ENCODE measurements at regions of chr1 and their contacts with region 1.

Region 1: GRCh38 chr1:150629115-150629928 is at the start of gene ENSA:
- DNase-seq: peak; percentile 85 to 99 (median 98)
- ATAC-seq: peak; percentile 91
- H3K4me3 ChIP-seq: peak within 1 kb of the TSS; percentile 88
- H3K4me3 Mint-ChIP-seq: no peak within 1 kb of the TSS
- H3K27ac ChIP-seq: peak within 1 kb of the TSS; percentile 98
- H3K27ac Mint-ChIP-seq: peak within 1 kb of the TSS in 2 of 9 donors; percentile 4 to 71
- H3K4me1 ChIP-seq: peaks cover 15 to 18% of the 10 kb centered on the region in 2 donors
- H3K4me1 Mint-ChIP-seq: peaks cover 0 to 40% (median 17%) of the 10 kb centered on the region in 7 donors
- H3K27me3 ChIP-seq: no peaks in the 10 kb centered on the region
- H3K27me3 Mint-ChIP-seq: no peaks in the 10 kb centered on the region
- total RNA-seq, gene ENSA: 97.2 to 178 (median 157) TPM

Region 2: GRCh38 chr1:150235852-150236613 is 393.3 kb before region 1 on chr1 and contains the start of gene ANP32E:
- CTCF ChIA-PET with region 1: no interaction called
- POLR2A ChIA-PET with region 1: interaction called, 4 read pairs
- intact Hi-C with region 1: loop called in 1 of 2 experiments (anchors 1 kb)
- DNase-seq: peak; percentile 75 to 99 (median 98)
- ATAC-seq: peak; percentile 94
- H3K4me3 ChIP-seq: peak within 1 kb of the TSS; percentile 98
- H3K4me3 Mint-ChIP-seq: peak within 1 kb of the TSS in 3 of 10 donors; percentile 10 to 93 (median 60)
- H3K27ac ChIP-seq: peak within 1 kb of the TSS; percentile 97
- H3K27ac Mint-ChIP-seq: peak within 1 kb of the TSS in 4 of 9 donors; percentile 97 to 99 (median 98)
- H3K4me1 ChIP-seq: peaks cover 0 to 7% of the 10 kb centered on the region in 2 donors
- H3K4me1 Mint-ChIP-seq: peaks cover 11 to 22% (median 18%) of the 10 kb centered on the region in 7 donors
- H3K27me3 ChIP-seq: no peaks in the 10 kb centered on the region
- H3K27me3 Mint-ChIP-seq: peaks cover 0 to 4% (median 0%) of the 10 kb centered on the region in 5 donors
- total RNA-seq, gene ANP32E: 35.6 to 156 (median 44.8) TPM

Region 3: DNA sequence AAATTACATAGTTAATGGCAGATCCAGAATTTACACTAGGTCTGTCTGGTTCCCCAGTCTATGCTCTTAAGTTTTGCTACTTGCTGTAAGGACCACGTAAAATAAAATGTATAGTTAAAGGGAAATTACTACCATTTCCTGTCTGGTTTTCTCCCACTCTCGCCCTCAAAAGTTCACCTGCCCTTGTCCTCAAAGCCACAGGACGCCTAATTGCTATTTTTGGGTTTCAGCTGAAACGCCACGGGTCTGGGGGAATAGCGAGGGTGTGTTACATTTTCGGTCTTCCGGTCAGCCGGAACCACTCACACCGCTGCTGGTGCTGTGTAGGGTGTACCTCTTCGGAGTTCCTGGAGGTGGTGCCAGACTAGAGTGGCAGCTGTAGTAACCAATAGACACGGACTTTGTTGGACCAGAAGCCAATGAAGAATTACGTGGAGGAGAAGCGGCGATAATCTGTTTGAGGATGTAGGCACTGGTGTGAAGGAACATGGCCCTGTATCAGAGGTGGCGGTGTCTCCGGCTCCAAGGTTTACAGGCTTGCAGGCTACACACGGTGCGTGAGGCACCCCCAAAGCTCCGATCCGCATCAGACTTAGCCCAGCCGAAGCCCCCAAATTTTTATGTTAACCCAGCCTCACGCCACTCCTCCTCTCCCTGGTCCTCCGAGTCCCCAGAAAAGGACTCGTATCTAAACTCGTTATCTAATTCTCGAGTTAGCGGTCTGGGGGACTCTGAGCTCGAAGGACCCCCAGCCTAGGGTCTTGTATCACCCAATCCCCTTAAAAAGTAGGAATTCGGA is 142.2 kb before region 1 on chr1 and contains the start of gene TARS2:
- CTCF ChIA-PET with region 1: no interaction called
- POLR2A ChIA-PET with region 1: interaction called, 3 read pairs
- intact Hi-C with region 1: loop called in 1 of 2 experiments (anchors 1 kb)
- DNase-seq: peak; percentile 71 to 97 (median 95)
- ATAC-seq: peak; percentile 100
- H3K4me3 ChIP-seq: peak within 1 kb of the TSS; percentile 95
- H3K4me3 Mint-ChIP-seq: peak within 1 kb of the TSS; percentile 91 to 100 (median 96)
- H3K27ac ChIP-seq: peak within 1 kb of the TSS; percentile 83
- H3K27ac Mint-ChIP-seq: peak within 1 kb of the TSS; percentile 92 to 100 (median 99)
- H3K4me1 ChIP-seq: peaks cover 4 to 8% of the 10 kb centered on the region in 2 donors
- H3K4me1 Mint-ChIP-seq: peaks cover 5 to 28% (median 20%) of the 10 kb centered on the region in 7 donors
- H3K27me3 ChIP-seq: no peaks in the 10 kb centered on the region
- H3K27me3 Mint-ChIP-seq: no peaks in the 10 kb centered on the region
- total RNA-seq, gene TARS2: 30.3 to 39.0 (median 36.4) TPM

Region 4: GRCh38 chr1:150613061-150613920 is 16.0 kb before region 1 on chr1:
- CTCF ChIA-PET with region 1: interaction called, 4 read pairs
- POLR2A ChIA-PET with region 1: interaction called, 6 read pairs
- intact Hi-C with region 1: loop called (anchors 1 kb)
- DNase-seq: peak in 2 of 9 donors; percentile 47 to 55
- ATAC-seq: peak; percentile 48
- H3K4me3 ChIP-seq: no peak overlapping the region
- H3K4me3 Mint-ChIP-seq: peak overlapping the region in 4 of 10 donors; percentile 21 to 80 (median 54)
- H3K27ac ChIP-seq: no peak overlapping the region
- H3K27ac Mint-ChIP-seq: peak overlapping the region; percentile 29 to 95 (median 88)
- H3K4me1 ChIP-seq: peaks cover 30 to 52% of the 10 kb centered on the region in 2 donors
- H3K4me1 Mint-ChIP-seq: peaks cover 27 to 59% (median 51%) of the 10 kb centered on the region in 7 donors
- H3K27me3 ChIP-seq: no peaks in the 10 kb centered on the region
- H3K27me3 Mint-ChIP-seq: no peaks in the 10 kb centered on the region

Region 5: GRCh38 chr1:150876119-150876454 is 246.8 kb after region 1 on chr1:
- CTCF ChIA-PET with region 1: no interaction called
- POLR2A ChIA-PET with region 1: no interaction called
- intact Hi-C with region 1: loop called (anchors 1 kb)
- DNase-seq: no peak
- ATAC-seq: peak; percentile 50
- H3K4me3 ChIP-seq: peak overlapping the region; percentile 68
- H3K4me3 Mint-ChIP-seq: peak overlapping the region; percentile 87 to 96 (median 95)
- H3K27ac ChIP-seq: peak overlapping the region; percentile 83
- H3K27ac Mint-ChIP-seq: peak overlapping the region; percentile 89 to 97 (median 94)
- H3K4me1 ChIP-seq: peaks cover 0 to 19% of the 10 kb centered on the region in 2 donors
- H3K4me1 Mint-ChIP-seq: peaks cover 13 to 45% (median 37%) of the 10 kb centered on the region in 7 donors
- H3K27me3 ChIP-seq: no peaks in the 10 kb centered on the region
- H3K27me3 Mint-ChIP-seq: no peaks in the 10 kb centered on the region

Region 6: DNA sequence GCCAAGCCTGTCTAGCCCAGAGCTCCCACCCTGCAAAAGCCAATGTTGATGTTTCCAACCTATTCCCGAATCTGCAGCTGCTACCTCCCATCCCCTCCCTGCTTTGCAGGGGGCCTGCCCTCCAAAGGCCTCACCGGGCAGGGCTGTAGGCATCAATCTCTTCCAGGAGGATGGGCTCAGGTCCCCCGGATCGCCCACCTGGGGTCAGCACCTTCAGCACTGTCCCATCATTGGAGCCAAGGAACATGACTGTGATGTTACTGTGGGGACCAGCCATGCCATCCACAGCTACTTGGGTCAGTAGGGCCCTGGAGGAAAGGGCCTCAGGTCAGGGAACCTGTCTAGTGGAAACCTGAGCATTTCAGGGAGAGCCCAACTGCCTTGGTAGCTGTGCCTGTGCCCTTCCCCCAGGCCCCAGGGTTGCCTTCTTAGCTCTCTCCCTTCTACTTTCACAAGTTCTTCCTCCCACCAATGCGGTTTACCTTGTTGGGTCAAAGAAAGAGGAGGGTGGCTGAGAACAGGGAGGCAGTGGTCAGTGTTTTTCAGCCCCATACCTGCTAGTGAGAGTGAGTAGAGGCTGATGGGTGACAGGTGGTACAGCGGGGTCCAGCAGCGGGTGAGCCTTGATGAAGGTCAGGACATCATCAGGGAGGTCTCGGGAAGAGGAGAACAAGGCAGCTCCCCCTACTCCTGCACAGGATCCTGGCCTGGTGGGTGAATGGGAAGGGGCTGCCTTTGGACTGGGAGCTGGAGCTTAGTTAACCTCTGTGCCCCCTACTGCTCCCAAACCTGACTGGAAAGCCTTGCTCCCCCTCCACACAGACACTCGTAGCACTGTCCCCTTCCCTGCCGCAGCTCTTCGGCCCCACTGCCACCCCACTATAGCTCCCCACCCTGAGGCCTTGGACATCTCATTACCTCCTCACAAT is 506.4 kb after region 1 on chr1:
- CTCF ChIA-PET with region 1: no interaction called
- POLR2A ChIA-PET with region 1: no interaction called
- intact Hi-C with region 1: no loop called
- DNase-seq: no peak
- ATAC-seq: no peak
- H3K4me3 ChIP-seq: no peak overlapping the region
- H3K4me3 Mint-ChIP-seq: no peak overlapping the region
- H3K27ac ChIP-seq: no peak overlapping the region
- H3K27ac Mint-ChIP-seq: no peak overlapping the region
- H3K4me1 ChIP-seq: peaks cover 0 to 4% of the 10 kb centered on the region in 2 donors
- H3K4me1 Mint-ChIP-seq: peaks cover 8 to 11% (median 8%) of the 10 kb centered on the region in 7 donors
- H3K27me3 ChIP-seq: no peaks in the 10 kb centered on the region
- H3K27me3 Mint-ChIP-seq: peaks cover 0 to 7% (median 0%) of the 10 kb centered on the region in 5 donors

Region 7: DNA sequence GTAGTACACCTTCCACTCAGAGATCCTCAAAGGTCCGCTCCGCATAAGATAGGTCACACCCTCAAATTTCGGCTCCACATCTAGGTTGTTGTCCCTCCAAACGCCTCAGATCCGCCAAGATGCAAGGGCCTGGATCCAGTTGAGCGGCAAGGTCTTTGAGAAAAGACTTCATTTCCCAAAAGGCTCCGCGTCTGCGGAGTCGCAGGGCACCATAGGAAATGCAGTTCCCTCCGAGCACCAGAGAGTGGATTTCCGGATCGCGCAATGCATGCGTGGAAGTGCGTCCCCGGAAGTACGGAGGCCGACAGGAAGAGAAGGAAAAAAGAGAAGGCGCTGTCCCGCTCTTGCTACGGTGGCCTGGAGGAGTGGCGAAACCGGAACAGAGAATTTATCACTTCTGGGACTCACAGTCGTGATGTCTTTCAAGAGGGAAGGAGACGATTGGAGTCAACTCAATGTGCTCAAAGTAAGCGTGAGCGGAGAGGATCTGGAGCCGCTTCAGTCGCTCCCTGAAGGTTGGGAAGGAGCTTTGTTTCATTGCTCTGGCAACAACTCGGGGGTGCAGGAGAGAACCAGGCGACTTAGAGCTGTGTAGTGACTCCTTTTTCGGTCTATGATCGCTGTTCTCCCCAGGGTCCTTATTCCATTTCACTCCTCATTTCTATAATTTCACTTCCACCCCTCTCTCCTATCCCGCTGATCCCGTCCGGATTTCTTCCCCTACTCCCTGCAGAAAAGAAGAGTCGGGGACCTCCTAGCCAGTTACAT is 536.6 kb after region 1 on chr1 and contains the starts of genes LYSMD1 and SCNM1:
- CTCF ChIA-PET with region 1: no interaction called
- POLR2A ChIA-PET with region 1: no interaction called
- intact Hi-C with region 1: loop called in 1 of 2 experiments (anchors 1 kb)
- DNase-seq: peak; percentile 78 to 98 (median 97)
- ATAC-seq: peak; percentile 98
- H3K4me3 ChIP-seq: peak within 1 kb of the TSS; percentile 97
- H3K4me3 Mint-ChIP-seq: peak within 1 kb of the TSS; percentile 87 to 99 (median 95)
- H3K27ac ChIP-seq: peak within 1 kb of the TSS; percentile 71
- H3K27ac Mint-ChIP-seq: peak within 1 kb of the TSS; percentile 90 to 99 (median 97)
- H3K4me1 ChIP-seq: peaks cover 18 to 19% of the 10 kb centered on the region in 2 donors
- H3K4me1 Mint-ChIP-seq: peaks cover 30 to 70% (median 52%) of the 10 kb centered on the region in 7 donors
- H3K27me3 ChIP-seq: no peaks in the 10 kb centered on the region
- H3K27me3 Mint-ChIP-seq: peaks cover 0 to 3% (median 0%) of the 10 kb centered on the region in 5 donors
- total RNA-seq, gene LYSMD1: 1.4 to 3.3 (median 2.3) TPM
- total RNA-seq, gene SCNM1: 37.1 to 73.1 (median 57.1) TPM